PC-9 (cell line): ENCODE measurements at regions of chr1 and their contacts with region 1.

Region 1: GRCh38 chr1:102790997-102791396 is 317.3 kb downstream of the COL11A1 start:
- DNase-seq: no peak
- H3K4me3 ChIP-seq: no peak overlapping the region
- H3K27ac ChIP-seq: no peak overlapping the region
- H3K4me1 ChIP-seq: no peaks in the 10 kb centered on the region
- H3K27me3 ChIP-seq: no peaks in the 10 kb centered on the region
- CTCF ChIP-seq: peak; percentile 59

Region 2: GRCh38 chr1:102566182-102566581 is 224.8 kb before region 1 on chr1:
- CTCF ChIA-PET with region 1: no interaction called
- POLR2A ChIA-PET with region 1: no interaction called
- intact Hi-C with region 1: loop called (anchors 10 kb)
- DNase-seq: no peak
- H3K4me3 ChIP-seq: no peak overlapping the region
- H3K27ac ChIP-seq: no peak overlapping the region
- H3K4me1 ChIP-seq: no peaks in the 10 kb centered on the region
- H3K27me3 ChIP-seq: no peaks in the 10 kb centered on the region
- CTCF ChIP-seq: no peak